Calu3 (cell line): ENCODE measurements at regions of chr17 and their contacts with region 1.

Region 1: DNA sequence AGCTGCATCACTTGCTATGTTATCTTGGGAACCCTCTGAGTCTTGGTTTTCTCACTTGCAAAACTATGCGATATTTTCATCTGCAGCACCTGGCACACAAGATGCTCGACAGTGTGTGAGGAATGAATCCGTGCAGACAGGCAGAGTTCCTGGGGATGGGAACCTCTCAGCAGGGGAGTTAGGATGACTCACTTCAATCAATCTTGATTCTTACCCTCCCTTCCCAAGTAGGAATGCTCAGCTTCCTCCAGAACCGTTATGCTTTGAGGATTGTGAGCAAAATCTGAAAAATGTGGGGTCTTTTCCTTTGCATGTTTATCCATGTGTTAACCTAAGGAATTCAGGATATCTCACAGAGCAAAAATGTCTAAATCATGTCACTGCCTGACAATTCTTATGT is 68.9 kb upstream of the HNF1B start:
- DNase-seq: no peak
- H3K4me3 Mint-ChIP-seq: no peak overlapping the region
- H3K27ac Mint-ChIP-seq: no peak overlapping the region
- H3K4me1 Mint-ChIP-seq: peaks cover 15% of the 10 kb centered on the region
- H3K27me3 Mint-ChIP-seq: peaks cover 16% of the 10 kb centered on the region
- CTCF ChIP-seq: no peak

Region 2: GRCh38 chr17:37392024-37392590 is 421.6 kb before region 1 on chr17:
- CTCF ChIA-PET with region 1: no interaction called
- intact Hi-C with region 1: no loop called
- DNase-seq: no peak
- H3K4me3 Mint-ChIP-seq: peak overlapping the region; percentile 38
- H3K27ac Mint-ChIP-seq: peak overlapping the region; percentile 9
- H3K4me1 Mint-ChIP-seq: peaks cover 20% of the 10 kb centered on the region
- H3K27me3 Mint-ChIP-seq: no peaks in the 10 kb centered on the region
- CTCF ChIP-seq: no peak

Region 3: GRCh38 chr17:37570527-37571093 is 243.1 kb before region 1 on chr17:
- CTCF ChIA-PET with region 1: interaction called, 24 read pairs
- intact Hi-C with region 1: no loop called
- DNase-seq: peak; percentile 92
- H3K4me3 Mint-ChIP-seq: no peak overlapping the region
- H3K27ac Mint-ChIP-seq: no peak overlapping the region
- H3K4me1 Mint-ChIP-seq: no peaks in the 10 kb centered on the region
- H3K27me3 Mint-ChIP-seq: no peaks in the 10 kb centered on the region
- CTCF ChIP-seq: peak; percentile 88

Region 4: GRCh38 chr17:37650419-37651003 is 163.2 kb before region 1 on chr17:
- CTCF ChIA-PET with region 1: interaction called, 135 read pairs
- intact Hi-C with region 1: loop called (anchors 1 kb)
- DNase-seq: peak; percentile 80
- H3K4me3 Mint-ChIP-seq: no peak overlapping the region
- H3K27ac Mint-ChIP-seq: no peak overlapping the region
- H3K4me1 Mint-ChIP-seq: peaks cover 17% of the 10 kb centered on the region
- H3K27me3 Mint-ChIP-seq: peaks cover 2% of the 10 kb centered on the region
- CTCF ChIP-seq: peak; percentile 85

Region 5: GRCh38 chr17:37737081-37737480 is 76.7 kb before region 1 on chr17:
- CTCF ChIA-PET with region 1: interaction called, 13 read pairs
- intact Hi-C with region 1: no loop called
- DNase-seq: no peak
- H3K4me3 Mint-ChIP-seq: no peak overlapping the region
- H3K27ac Mint-ChIP-seq: peak overlapping the region; percentile 38
- H3K4me1 Mint-ChIP-seq: peaks cover 49% of the 10 kb centered on the region
- H3K27me3 Mint-ChIP-seq: no peaks in the 10 kb centered on the region
- CTCF ChIP-seq: peak; percentile 74

Region 6: DNA sequence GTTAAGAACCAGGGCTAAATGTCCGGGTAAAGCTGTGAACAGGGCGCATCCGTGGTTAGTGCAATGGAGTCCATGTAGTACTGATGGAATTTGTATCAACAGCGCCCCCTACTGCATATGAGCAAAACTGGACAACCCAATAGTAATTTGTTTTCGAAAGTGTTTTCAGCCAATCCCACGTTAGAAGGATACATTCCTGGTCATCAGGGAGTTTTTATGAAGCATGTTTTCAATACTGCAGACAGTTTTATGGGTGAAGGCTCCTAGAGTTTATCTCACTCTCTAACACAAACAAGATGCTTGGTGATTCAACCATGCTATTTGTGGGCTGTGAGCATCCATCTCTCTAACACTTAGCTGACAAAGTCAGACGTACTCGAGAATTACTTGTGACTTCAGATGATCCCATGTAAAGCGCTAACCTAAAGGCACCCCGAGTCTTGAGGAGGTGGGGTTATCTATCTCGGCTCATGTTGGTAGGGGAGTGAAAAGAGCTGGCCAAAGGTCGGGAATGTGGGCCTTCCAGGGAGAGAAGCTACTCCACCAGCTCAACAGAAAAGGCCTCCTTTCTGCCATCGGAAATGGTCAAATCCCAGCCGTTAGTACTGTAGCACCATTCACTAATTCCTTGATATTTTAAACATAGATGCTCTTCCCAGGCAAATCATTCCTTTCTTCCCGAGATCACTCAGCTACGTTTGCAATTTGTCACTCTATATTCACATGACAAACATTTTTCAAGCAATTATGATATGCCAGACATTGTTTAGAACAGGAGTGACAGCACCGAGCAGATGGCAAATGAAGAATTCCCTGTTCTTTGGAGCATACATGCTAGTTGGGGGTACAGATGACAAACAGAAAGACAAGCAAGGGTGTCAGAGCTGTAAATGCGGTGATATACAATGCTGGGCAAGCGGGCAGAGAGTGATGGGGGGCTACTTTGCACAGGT is 22.0 kb before region 1 on chr17:
- CTCF ChIA-PET with region 1: interaction called, 25 read pairs
- intact Hi-C with region 1: no loop called
- DNase-seq: peak; percentile 71
- H3K4me3 Mint-ChIP-seq: no peak overlapping the region
- H3K27ac Mint-ChIP-seq: no peak overlapping the region
- H3K4me1 Mint-ChIP-seq: peaks cover 19% of the 10 kb centered on the region
- H3K27me3 Mint-ChIP-seq: peaks cover 45% of the 10 kb centered on the region
- CTCF ChIP-seq: peak; percentile 98

Region 7: DNA sequence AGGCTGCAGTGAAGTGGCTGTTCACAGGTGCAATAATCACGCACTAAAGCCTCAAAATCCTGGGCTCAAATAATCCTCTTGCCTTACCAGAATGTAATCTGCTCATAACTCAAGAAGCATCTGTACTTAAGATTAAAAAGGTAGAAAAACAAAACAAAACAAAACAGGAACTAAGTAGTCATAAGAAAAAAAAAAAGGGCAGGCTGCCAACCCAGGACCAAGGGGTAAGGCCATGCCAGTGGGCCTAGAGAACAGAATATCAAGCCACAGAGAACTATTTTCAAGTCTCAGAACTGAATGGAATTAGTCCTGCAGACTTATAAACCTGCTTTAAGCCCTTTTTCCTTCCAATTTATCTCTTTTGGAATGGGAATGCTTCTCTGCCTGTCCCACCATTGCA is 45.7 kb after region 1 on chr17:
- CTCF ChIA-PET with region 1: no interaction called
- intact Hi-C with region 1: no loop called
- DNase-seq: no peak
- H3K4me3 Mint-ChIP-seq: no peak overlapping the region
- H3K27ac Mint-ChIP-seq: no peak overlapping the region
- H3K4me1 Mint-ChIP-seq: no peaks in the 10 kb centered on the region
- H3K27me3 Mint-ChIP-seq: peaks cover 42% of the 10 kb centered on the region
- CTCF ChIP-seq: no peak